Sciatic nerve (tissue), 2 donors: ENCODE measurements at regions of chr2 and their contacts with region 1.

Region 1: DNA sequence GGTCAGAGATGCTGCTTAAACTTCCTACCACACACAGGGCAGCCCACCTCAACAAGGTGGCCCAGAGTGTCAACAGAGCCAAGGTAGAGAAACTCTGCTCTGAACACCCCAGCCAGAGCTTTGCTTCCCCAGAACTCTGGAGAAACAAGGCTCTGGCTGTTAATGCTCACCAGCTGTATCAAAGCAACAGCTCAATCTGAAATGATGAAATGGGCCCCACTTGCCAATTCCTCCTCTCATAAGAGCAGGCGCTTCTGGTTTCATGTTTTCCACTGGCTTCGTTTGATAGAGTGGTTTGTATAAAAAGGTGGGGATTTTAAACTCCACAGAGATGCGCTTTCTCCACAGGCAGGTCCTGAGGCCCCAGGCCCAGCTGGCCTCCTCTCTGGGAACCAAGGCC is 60.9 kb upstream of the TFCP2L1 start:
- DNase-seq: no peak
- ATAC-seq: peak; percentile 71

Region 2: DNA sequence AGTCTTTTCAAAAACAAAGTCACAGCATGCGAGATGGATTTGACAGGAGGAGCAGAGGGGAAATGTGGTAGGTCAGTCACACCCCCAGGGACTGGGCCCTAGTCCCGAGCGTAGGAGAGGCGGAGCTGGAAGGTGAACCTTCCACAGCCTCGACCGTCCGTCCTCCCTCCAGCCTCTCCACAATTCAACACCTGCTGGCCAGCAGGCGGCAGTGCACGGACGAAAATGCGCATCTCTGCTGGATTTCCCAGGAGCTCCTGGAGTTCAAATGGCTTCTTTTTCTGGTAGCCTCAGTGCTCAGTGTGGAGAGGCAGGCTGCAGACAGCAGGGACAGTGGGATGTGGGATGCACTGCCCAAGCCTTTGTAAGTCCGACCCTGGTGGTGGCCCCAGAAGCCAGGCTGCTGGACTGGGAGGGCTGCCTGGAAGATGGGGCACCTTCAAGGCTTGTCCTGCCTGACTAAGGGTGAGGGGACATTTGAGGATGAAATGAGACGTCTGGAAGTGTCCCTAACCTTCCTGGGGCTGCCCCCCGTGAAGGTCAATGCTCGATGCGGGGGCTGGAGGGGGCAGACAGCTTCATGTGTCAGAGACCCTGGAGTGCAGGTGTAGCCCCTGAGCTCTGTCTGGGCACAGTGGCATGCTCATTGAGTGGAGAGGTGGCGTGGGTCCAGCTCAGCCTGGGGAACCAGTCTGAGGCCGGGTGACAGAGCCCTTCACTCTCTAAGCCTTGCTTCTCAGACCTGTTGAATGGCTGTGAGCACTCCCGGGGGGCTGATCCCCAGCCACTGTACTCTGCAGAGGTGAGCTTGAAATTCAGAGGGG is 250.4 kb before region 1 on chr2:
- intact Hi-C with region 1: loop called (anchors 10 kb)
- DNase-seq: no peak
- ATAC-seq: peak; percentile 44